Aorta (tissue), 5 donors: ENCODE measurements at regions of chr18 and their contacts with region 1.

Region 1: GRCh38 chr18:70181015-70181414 is 24.5 kb downstream of the RTTN start:
- DNase-seq: no peak
- ATAC-seq: no peak
- H3K4me3 ChIP-seq: no peak overlapping the region
- H3K27ac ChIP-seq: no peak overlapping the region
- H3K4me1 ChIP-seq: no peaks in the 10 kb centered on the region
- H3K27me3 ChIP-seq: no peaks in the 10 kb centered on the region

Region 2: GRCh38 chr18:70107091-70107490 is 73.9 kb before region 1 on chr18:
- intact Hi-C with region 1: no loop called
- DNase-seq: no peak
- ATAC-seq: no peak
- H3K4me3 ChIP-seq: no peak overlapping the region
- H3K27ac ChIP-seq: no peak overlapping the region
- H3K4me1 ChIP-seq: no peaks in the 10 kb centered on the region
- H3K27me3 ChIP-seq: no peaks in the 10 kb centered on the region

Region 3: DNA sequence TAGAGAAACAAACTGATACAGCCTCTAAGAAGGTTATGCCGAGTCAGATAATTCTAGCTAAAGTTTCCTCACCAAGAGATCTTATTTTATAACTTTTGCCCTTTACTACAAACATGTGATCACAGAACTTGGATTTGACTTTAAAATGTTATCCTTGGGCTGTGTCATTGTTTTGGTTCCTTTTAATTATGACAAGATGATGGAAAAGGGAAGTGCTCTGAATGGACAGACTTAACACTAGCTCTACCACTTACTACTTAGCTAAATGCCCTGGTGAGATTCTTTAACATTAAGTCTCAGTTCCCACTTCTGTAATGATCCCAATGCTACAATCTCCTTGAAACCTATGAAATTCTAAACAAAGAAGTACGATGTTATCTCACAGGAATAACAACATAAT is 45.4 kb before region 1 on chr18:
- intact Hi-C with region 1: loop called (anchors 5 kb)
- DNase-seq: no peak
- ATAC-seq: no peak
- H3K4me3 ChIP-seq: no peak overlapping the region
- H3K27ac ChIP-seq: peak overlapping the region in 1 of 2 donors; percentile 51
- H3K4me1 ChIP-seq: peaks cover 0 to 2% of the 10 kb centered on the region in 2 donors
- H3K27me3 ChIP-seq: no peaks in the 10 kb centered on the region

Region 4: DNA sequence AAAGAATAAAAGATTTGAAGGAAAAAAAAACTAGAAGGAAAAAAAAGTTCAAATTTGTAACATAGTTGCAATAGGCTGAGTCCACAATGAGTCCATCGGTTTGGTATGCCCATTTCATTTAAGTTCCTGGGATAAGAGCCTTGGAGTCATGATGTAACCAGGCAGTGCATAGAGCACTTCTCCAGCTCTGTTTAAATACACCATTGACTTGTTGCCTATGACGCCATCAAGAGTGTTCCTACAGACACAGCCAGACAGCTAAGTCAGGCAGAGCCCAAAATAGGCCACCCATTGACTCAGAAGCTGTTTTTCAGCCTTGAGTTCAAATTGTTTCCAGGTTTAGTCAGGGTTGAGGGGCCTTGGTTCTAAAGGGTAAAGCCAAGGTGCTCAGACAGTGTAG is 152.7 kb after region 1 on chr18:
- intact Hi-C with region 1: no loop called
- DNase-seq: no peak
- ATAC-seq: peak; percentile 69
- H3K4me3 ChIP-seq: no peak overlapping the region
- H3K27ac ChIP-seq: peak overlapping the region; percentile 2 to 51
- H3K4me1 ChIP-seq: peaks cover 0 to 4% of the 10 kb centered on the region in 2 donors
- H3K27me3 ChIP-seq: no peaks in the 10 kb centered on the region